Dendritic cell treated with granulocyte-macrophage colony-stimulating factor and Interleukin-4, amounts not matched to agents 40 ng/mL and 50 ng/mL, for 4 days (primary cell): ENCODE measurements at regions of chr17 and their contacts with region 1.

Region 1: GRCh38 chr17:21511363-21512198 is 135.4 kb downstream of the KCNJ12 start:
- H3K4me3 Mint-ChIP-seq: peak overlapping the region; percentile 77
- H3K27ac Mint-ChIP-seq: peak overlapping the region; percentile 65
- H3K4me1 Mint-ChIP-seq: peaks cover 31% of the 10 kb centered on the region
- H3K27me3 Mint-ChIP-seq: peaks cover 46% of the 10 kb centered on the region

Region 2: GRCh38 chr17:21119919-21120249 is 391.7 kb before region 1 on chr17:
- intact Hi-C with region 1: loop called (anchors 2 kb)
- H3K4me3 Mint-ChIP-seq: no peak overlapping the region
- H3K27ac Mint-ChIP-seq: no peak overlapping the region
- H3K4me1 Mint-ChIP-seq: peaks cover 32% of the 10 kb centered on the region
- H3K27me3 Mint-ChIP-seq: peaks cover 4% of the 10 kb centered on the region

Region 3: DNA sequence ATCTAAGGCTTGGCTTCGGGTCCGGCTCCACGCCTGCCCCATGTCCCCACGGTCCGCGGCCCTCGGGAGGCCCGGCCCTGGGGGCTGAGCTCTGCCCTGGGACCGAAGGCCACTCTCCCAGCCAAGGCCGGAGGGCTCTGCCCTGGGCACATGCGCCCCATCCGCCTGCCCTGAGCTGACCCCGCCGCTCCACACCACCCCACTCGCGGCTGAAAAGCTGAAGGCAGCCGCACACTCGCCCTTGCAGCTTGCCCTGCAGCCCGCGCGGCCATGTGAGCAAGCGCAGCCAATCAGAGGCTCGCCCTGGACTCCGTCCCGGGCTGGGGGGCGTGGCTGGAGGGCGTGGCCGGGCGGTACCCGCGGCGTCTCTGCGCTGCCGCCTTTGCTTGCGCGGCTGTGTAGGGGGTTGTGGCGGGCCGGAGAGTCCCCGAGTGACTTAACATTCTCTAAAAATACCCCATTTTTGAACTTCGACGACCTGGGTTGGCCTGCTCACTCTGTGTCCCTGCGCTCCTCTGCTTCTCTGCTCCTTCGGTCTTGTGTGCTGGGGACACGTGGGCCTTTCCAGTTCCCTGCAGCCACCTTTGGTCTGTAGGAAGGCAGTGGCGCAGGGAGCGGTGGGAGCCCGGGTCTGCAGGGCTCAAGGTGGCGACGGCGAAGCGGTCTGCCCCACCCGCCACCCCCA is 235.9 kb before region 1 on chr17:
- intact Hi-C with region 1: loop called (anchors 1 kb)
- H3K4me3 Mint-ChIP-seq: peak overlapping the region; percentile 84
- H3K27ac Mint-ChIP-seq: peak overlapping the region; percentile 58
- H3K4me1 Mint-ChIP-seq: peaks cover 40% of the 10 kb centered on the region
- H3K27me3 Mint-ChIP-seq: peaks cover 19% of the 10 kb centered on the region

Region 4: DNA sequence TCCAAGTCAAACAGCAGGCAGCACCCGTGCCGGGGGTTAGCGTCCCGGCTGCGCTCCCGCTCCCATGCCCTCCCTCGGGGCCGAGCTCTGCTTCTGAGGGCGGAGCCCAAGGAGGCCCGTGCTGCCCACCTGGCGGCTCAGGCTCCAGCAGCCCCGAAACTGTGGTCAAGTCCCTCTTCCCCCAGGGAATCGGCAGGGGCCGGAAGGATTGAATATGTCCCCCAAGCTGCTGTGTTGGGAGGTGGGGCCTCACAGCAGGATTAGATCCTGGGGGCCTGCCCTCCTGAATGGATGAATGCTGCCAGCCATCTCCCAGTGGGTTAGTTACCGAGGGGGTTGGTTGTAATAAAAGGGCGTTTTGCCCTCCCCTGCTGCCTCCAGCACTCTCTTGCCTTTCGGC is 193.1 kb before region 1 on chr17:
- intact Hi-C with region 1: loop called (anchors 5 kb)
- H3K4me3 Mint-ChIP-seq: no peak overlapping the region
- H3K27ac Mint-ChIP-seq: no peak overlapping the region
- H3K4me1 Mint-ChIP-seq: peaks cover 16% of the 10 kb centered on the region
- H3K27me3 Mint-ChIP-seq: peaks cover 9% of the 10 kb centered on the region